Left cardiac atrium (tissue), 4 donors: ENCODE measurements at regions of chr7 and their contacts with region 1.

Region 1: DNA sequence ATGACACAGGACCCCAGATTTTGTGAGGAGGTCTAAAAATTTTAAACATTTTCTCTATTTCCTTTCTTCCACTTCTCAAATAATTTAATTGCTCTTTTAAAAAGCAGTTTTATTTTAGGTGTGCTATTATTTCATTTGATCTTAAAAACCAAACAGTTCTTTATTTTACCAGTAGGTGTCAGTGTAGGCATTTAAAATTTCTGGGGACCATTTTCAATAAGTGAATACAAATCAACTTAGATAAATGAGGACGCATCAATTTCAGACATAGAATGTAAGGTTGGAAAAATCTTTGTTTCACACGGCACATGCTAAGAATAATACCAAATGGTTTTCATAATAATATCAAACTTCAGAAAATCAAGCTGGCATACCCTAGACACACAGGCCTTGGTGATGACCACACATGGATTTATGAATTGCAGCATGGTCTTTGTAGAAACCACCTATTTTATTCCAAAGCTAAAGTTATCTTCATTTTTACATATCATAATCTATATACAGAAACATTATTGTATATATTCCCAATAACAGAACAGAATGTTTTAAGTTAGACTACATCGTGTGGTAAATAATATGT is 127.6 kb upstream of the SLC26A5 start:
- DNase-seq: no peak
- ATAC-seq: no peak

Region 2: GRCh38 chr7:103432712-103433111 is 140.9 kb before region 1 on chr7:
- intact Hi-C with region 1: no loop called
- DNase-seq: no peak
- ATAC-seq: no peak

Region 3: DNA sequence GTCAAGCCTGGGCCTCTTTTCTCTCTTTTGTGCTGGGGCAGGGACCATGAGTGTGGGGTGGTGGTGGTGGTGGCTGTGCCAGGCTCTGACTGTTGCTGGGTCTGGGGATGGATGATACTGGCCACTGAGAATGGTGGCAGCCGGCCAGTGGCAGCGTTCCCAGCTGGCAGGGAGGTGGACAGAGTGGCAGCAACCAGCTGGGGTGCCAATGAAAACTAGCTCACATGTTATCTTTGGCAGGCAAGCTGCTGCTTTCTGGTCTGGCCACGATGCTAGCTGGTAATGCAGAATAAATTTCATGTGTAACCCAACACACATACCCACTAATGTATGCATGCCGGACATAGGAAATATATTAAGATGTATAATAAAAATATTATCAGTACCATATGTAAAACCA is 32.5 kb before region 1 on chr7:
- intact Hi-C with region 1: no loop called
- DNase-seq: peak; percentile 76
- ATAC-seq: peak; percentile 98 to 99

Region 4: DNA sequence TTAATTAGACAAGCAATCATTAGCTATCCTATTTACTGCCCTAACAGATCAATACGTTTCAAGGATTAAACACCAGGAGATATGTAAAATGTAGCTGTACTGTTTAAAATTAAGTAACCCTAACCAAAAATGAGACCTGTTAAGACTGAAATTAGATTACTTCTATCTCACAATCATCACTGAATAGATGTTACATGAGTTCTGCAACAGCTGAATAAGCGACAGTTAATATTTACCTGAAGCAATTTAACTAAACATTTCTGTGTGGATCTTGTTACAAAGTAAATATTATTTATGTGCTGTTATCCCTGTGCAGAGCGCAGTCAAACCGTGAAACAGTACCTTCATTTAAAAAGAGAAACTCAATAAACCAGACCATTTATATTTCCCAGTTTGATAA is 293.4 kb after region 1 on chr7:
- intact Hi-C with region 1: no loop called
- DNase-seq: no peak
- ATAC-seq: no peak

Region 5: GRCh38 chr7:103981003-103981423 is 407.4 kb after region 1 on chr7:
- intact Hi-C with region 1: no loop called
- DNase-seq: no peak
- ATAC-seq: no peak

Region 6: DNA sequence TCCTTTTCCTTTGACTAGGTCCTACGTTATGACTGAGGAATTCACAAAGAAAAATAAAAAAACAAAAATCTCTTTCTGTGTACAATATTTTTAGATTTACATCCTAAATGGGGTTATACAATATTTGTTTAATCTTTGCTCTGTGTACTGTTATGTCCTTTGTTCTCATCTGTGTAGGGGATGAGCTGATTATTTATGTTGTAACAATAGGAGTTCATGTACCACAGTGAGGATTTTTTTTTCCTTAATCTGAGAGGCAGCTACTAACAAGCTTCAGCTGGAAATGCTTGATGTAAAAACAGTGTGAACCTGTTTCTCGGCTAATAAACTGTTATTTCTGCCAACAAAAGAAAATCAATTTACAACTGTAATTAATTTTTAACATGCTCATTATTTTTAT is 576.3 kb after region 1 on chr7:
- intact Hi-C with region 1: loop called in 1 of 2 experiments (anchors 5 kb)
- DNase-seq: no peak
- ATAC-seq: no peak

Region 7: DNA sequence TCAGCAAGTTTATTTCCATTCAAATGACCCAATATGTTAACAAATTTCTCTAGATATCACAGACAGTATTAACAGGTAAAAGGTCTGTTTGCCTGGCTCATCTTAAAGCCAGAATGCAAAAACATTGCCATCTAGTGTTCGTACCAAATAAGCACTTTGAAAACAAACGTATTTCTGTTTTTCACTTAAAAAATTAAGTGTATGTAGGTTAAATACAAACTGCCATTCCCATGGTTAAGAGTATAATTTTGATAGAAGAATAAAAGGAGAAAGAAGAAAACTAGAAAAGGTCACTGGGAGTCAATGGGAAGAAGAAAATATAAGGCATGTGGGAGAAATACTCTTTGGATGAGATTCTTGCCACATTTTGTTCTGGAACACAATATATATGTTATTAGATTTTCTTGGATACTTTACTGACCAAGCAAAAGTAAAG is 583.3 kb after region 1 on chr7:
- intact Hi-C with region 1: loop called (anchors 5 kb)
- DNase-seq: no peak
- ATAC-seq: no peak